Dendritic cell treated with granulocyte-macrophage colony-stimulating factor and Interleukin-4, amounts not matched to agents 40 ng/mL and 50 ng/mL, for 4 days (primary cell): ENCODE measurements at regions of chr4 and their contacts with region 1.

Region 1: DNA sequence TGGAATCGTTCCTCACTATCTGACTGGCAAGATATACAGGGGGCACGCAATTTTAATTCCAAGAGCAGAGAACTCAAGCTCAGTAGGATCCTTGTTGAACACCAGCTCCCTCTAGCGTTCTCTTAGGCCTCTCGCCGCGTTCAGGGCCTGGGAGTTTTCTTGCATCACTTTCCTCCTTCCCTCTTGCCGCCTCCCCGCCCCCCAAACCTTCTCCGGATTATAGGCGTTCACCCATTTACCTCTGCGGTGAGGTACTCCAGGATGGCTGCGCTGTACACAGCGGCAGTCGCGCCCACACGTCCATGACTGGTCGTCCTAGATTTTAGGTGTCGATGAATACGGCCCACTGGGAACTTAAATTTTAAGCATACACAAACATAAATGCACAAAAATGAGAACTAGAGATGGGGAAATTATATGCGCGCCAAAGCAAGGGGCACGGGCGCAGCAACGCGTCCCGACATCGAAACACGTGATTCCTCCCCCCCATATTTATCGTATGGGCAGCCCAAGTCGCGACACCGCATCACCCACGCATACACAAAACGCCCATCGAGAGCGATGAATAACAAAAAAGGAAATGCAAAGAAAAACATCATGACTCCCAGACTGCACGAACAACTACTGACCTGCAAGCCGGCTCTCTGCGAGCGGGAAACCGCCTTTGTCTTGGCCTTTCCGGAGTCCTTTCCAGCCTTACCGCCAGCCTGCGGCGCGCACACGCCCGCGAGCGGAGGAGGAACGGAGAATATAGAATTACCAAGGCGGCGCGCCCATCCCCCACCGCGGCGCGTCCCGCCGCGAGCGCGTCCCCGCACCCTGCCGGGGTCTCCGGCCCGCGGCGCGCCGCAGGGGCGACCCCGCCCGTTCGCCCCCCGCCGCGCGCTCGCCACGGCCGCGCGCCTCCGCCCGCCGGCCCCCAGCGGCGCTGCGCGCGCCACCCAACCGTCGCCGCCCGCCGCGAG is 759 bp downstream of the H2AZ1 start:
- H3K4me3 Mint-ChIP-seq: no peak overlapping the region
- H3K27ac Mint-ChIP-seq: no peak overlapping the region
- H3K4me1 Mint-ChIP-seq: peaks cover 30% of the 10 kb centered on the region
- H3K27me3 Mint-ChIP-seq: no peaks in the 10 kb centered on the region

Region 2: GRCh38 chr4:98995183-98996055 is 953.9 kb before region 1 on chr4 and contains the start of gene METAP1:
- intact Hi-C with region 1: loop called (anchors 10 kb)
- H3K4me3 Mint-ChIP-seq: peak within 1 kb of the TSS; percentile 86
- H3K27ac Mint-ChIP-seq: peak within 1 kb of the TSS; percentile 94
- H3K4me1 Mint-ChIP-seq: peaks cover 27% of the 10 kb centered on the region
- H3K27me3 Mint-ChIP-seq: peaks cover 3% of the 10 kb centered on the region

Region 3: GRCh38 chr4:99894161-99894997 is 54.9 kb before region 1 on chr4 and contains the start of gene LAMTOR3:
- intact Hi-C with region 1: loop called (anchors 2 kb)
- H3K4me3 Mint-ChIP-seq: peak within 1 kb of the TSS; percentile 97
- H3K27ac Mint-ChIP-seq: peak within 1 kb of the TSS; percentile 96
- H3K4me1 Mint-ChIP-seq: peaks cover 31% of the 10 kb centered on the region
- H3K27me3 Mint-ChIP-seq: no peaks in the 10 kb centered on the region

Region 4: GRCh38 chr4:99915449-99915848 is 33.9 kb before region 1 on chr4:
- intact Hi-C with region 1: loop called (anchors 5 kb)
- H3K4me3 Mint-ChIP-seq: no peak overlapping the region
- H3K27ac Mint-ChIP-seq: no peak overlapping the region
- H3K4me1 Mint-ChIP-seq: no peaks in the 10 kb centered on the region
- H3K27me3 Mint-ChIP-seq: no peaks in the 10 kb centered on the region

Region 5: DNA sequence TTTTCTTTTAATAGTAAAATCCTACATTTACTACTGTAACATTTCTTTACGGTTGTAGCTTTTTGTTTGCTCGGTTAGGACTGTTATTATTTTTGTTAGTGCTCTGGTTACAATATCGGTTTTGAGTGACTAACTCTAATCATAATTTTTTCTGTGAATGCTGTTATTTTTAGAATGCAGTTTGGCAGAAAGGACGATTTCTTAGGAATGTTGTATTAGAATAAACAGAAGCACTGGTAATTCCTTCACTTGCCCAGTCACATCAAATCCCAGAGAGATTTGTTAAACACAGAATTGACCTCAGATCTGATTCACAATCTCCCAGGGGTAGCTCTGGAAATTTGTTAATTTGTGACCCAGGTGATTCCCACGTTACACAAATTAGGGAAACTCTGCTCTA is 219.2 kb after region 1 on chr4:
- intact Hi-C with region 1: no loop called
- H3K4me3 Mint-ChIP-seq: no peak overlapping the region
- H3K27ac Mint-ChIP-seq: no peak overlapping the region
- H3K4me1 Mint-ChIP-seq: no peaks in the 10 kb centered on the region
- H3K27me3 Mint-ChIP-seq: no peaks in the 10 kb centered on the region